Calu3 (cell line): ENCODE measurements at regions of chr12 and their contacts with region 1.

Region 1: GRCh38 chr12:41514907-41515306 is 326.8 kb downstream of the PDZRN4 start:
- DNase-seq: peak; percentile 5
- H3K4me3 Mint-ChIP-seq: no peak overlapping the region
- H3K27ac Mint-ChIP-seq: no peak overlapping the region
- H3K4me1 Mint-ChIP-seq: no peaks in the 10 kb centered on the region
- H3K27me3 Mint-ChIP-seq: no peaks in the 10 kb centered on the region
- CTCF ChIP-seq: no peak

Region 2: GRCh38 chr12:42023733-42024494 is 509.0 kb after region 1 on chr12:
- CTCF ChIA-PET with region 1: no interaction called
- intact Hi-C with region 1: loop called (anchors 1 kb)
- DNase-seq: peak; percentile 68
- H3K4me3 Mint-ChIP-seq: peak overlapping the region; percentile 64
- H3K27ac Mint-ChIP-seq: peak overlapping the region; percentile 31
- H3K4me1 Mint-ChIP-seq: no peaks in the 10 kb centered on the region
- H3K27me3 Mint-ChIP-seq: no peaks in the 10 kb centered on the region
- CTCF ChIP-seq: peak; percentile 71